Activated CD4-positive, alpha-beta memory T cell treated with anti-CD3 and anti-CD28 coated beads, Interleukin-2, amount 10 ng/mL, durations not matched to agents 7 days and 5 days (primary cell): ENCODE measurements at regions of chr12 and their contacts with region 1.

Region 1: DNA sequence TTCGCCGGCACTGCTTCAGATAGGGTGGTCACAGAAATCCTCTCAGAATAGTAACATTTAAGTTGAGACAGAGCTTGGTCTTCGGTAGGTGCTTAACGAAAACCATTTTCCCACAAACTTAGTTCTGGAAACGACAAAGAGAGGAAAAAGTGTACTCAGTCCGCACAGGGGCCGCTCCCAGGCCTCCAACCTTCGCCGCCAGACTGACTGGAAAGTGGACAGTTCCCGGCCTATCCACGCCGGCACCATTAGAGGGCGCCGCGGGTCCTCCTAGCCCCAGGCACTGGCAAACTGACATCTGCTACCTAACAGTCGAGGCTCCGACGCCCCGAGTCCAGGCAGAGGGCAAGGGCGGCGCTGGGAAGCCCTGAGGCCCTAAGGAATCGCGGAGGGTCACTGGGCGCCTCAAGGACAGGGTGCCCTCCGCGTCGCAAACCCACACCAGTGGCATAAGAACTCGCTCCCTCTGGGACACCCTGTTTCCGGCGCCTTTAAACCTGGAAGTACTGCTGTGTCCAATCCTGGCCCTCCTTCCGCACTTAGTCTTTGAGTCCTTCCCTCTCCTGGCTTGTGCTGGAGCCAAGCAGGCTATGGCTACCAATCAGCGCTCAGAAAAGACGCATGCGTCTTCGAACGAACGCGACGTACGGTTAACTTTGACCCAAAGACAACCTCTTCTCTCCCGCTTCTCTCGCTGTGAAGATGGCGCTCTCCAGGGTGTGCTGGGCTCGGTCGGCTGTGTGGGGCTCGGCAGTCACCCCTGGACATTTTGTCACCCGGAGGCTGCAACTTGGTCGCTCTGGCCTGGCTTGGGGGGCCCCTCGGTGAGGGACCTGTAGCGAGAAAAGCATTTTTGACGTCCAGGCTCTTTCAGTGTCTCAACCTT is at the start of gene LETMD1:
- DNase-seq: peak; percentile 93
- H3K4me3 Mint-ChIP-seq: peak within 1 kb of the TSS; percentile 94
- H3K27ac Mint-ChIP-seq: peak within 1 kb of the TSS; percentile 92
- H3K4me1 Mint-ChIP-seq: peaks cover 37% of the 10 kb centered on the region
- H3K27me3 Mint-ChIP-seq: no peaks in the 10 kb centered on the region
- total RNA-seq, gene LETMD1: 92.1 to 93.9 TPM

Region 2: GRCh38 chr12:50934981-50935807 is 112.7 kb before region 1 on chr12:
- CTCF ChIA-PET with region 1: no interaction called
- POLR2A ChIA-PET with region 1: no interaction called
- DNase-seq: no peak
- H3K4me3 Mint-ChIP-seq: no peak overlapping the region
- H3K27ac Mint-ChIP-seq: no peak overlapping the region
- H3K4me1 Mint-ChIP-seq: no peaks in the 10 kb centered on the region
- H3K27me3 Mint-ChIP-seq: no peaks in the 10 kb centered on the region

Region 3: DNA sequence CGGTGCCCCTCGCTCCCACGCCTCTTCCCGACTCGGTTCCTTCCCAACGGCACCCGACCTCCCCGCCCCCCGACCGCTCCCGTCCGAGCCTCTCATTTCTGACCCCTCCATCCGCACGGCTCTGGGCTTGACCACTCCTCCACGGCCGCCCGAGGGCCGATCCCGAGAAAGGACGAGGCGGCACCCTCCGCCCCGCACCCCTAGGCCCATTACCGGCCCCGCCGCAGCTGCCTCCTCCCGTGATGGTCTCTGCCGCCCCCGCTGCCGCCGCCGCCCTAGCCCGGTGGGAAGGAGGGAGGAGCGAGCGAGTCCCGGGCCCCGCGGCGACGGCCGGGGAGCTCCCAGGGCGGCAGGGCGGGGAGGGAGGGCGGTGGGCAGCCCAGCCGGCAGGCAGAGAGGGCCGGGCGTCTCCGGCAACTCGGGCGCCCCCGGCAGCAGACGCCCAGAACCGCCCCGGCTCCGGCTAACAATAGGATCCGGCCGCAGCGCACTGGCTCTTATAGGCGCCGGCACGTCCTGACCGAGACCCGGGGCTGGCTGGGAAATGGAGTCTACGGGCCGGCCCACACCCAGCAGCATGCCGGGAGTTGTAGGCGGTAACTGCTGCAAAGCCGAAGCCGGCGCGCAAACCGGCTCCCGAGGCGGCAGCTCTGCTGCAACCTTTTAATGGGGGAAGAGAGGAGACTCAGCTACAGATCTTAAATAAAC is 35.4 kb after region 1 on chr12 and contains the start of gene CSRNP2:
- CTCF ChIA-PET with region 1: interaction called, 3 read pairs
- POLR2A ChIA-PET with region 1: interaction called, 31 read pairs
- DNase-seq: peak; percentile 96
- H3K4me3 Mint-ChIP-seq: peak within 1 kb of the TSS; percentile 92
- H3K27ac Mint-ChIP-seq: peak within 1 kb of the TSS; percentile 71
- H3K4me1 Mint-ChIP-seq: peaks cover 42% of the 10 kb centered on the region
- H3K27me3 Mint-ChIP-seq: no peaks in the 10 kb centered on the region
- total RNA-seq, gene CSRNP2: 14.7 to 16.3 TPM

Region 4: GRCh38 chr12:51326762-51327439 is 279.0 kb after region 1 on chr12:
- CTCF ChIA-PET with region 1: interaction called, 4 read pairs
- POLR2A ChIA-PET with region 1: interaction called, 11 read pairs
- DNase-seq: peak; percentile 24
- H3K4me3 Mint-ChIP-seq: peak overlapping the region; percentile 45
- H3K27ac Mint-ChIP-seq: peak overlapping the region; percentile 97
- H3K4me1 Mint-ChIP-seq: peaks cover 70% of the 10 kb centered on the region
- H3K27me3 Mint-ChIP-seq: peaks cover 2% of the 10 kb centered on the region